Esophagus squamous epithelium (tissue), 5 donors: ENCODE measurements at regions of chr2 and their contacts with region 1.

Region 1: GRCh38 chr2:197499594-197500526 is at the starts of genes HSPD1 and HSPE1:
- DNase-seq: peak; percentile 90
- H3K4me3 ChIP-seq: peak within 1 kb of the TSS; percentile 83 to 90 (median 86)
- H3K27ac ChIP-seq: peak within 1 kb of the TSS; percentile 91 to 100 (median 98)
- H3K4me1 ChIP-seq: peaks cover 0 to 61% (median 44%) of the 10 kb centered on the region in 3 donors
- H3K27me3 ChIP-seq: no peaks in the 10 kb centered on the region
- CTCF ChIP-seq: peak in 2 of 6 experiments; percentile 15 to 47
- POLR2A ChIP-seq: peak in 3 of 4 donors; percentile 84 to 97 (median 92)
- total RNA-seq, gene HSPD1: 101 to 226 (median 177) TPM
- total RNA-seq, gene HSPE1: 80.9 to 217 (median 138) TPM

Region 2: GRCh38 chr2:197453161-197453914 is 46.5 kb before region 1 on chr2 and contains the start of gene COQ10B:
- intact Hi-C with region 1: loop called (anchors 5 kb)
- DNase-seq: peak; percentile 96
- H3K4me3 ChIP-seq: peak within 1 kb of the TSS; percentile 66 to 97 (median 92)
- H3K27ac ChIP-seq: peak within 1 kb of the TSS; percentile 98 to 100 (median 100)
- H3K4me1 ChIP-seq: peaks cover 8 to 45% (median 16%) of the 10 kb centered on the region in 3 donors
- H3K27me3 ChIP-seq: no peaks in the 10 kb centered on the region
- CTCF ChIP-seq: peak in 4 of 6 experiments; percentile 5 to 44 (median 34)
- POLR2A ChIP-seq: peak in 3 of 4 donors; percentile 64 to 94 (median 75)
- total RNA-seq, gene COQ10B: 15.9 to 26.3 (median 22.7) TPM

Region 3: DNA sequence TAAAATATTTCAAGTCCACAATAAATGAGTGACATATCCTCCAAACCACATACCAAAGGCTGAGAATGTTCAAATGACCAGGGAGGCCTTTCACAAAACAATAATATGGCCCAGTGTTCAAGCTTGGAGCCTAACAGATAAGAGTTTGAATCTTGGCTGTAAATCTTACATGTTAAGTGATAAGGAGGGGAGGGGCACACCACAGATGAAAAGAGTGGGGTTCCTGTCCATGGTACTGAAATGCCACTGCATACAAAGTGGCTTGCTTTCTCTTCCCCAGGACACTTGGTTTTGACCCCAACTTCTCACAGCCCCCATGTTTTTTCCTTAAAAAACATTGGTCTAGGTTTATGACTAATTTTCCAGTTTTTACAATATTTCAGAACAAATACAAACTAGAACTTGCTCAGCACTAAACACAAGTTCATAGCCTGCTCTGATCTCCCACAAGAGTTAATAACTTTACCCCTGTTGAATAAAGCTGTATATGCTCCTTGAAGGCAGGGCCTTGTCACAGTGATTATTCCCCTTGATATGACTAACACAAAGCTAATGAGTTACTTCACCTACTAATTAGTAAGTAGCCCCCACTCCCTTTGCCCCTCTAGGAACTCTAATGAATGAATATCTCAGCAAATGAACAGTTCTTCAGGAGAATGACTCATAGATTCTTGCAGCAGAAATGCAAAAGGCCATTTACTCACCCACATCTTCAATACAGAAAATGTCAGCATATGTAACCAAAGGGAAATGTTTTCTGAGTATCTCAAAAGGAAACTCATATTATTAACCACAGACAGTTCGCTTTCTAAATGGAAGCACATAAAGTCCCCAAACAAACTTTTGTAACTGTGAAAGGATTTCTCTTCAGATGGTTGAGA is 1815.7 kb after region 1 on chr2:
- intact Hi-C with region 1: no loop called
- DNase-seq: no peak
- H3K4me3 ChIP-seq: no peak overlapping the region
- H3K27ac ChIP-seq: no peak overlapping the region
- H3K4me1 ChIP-seq: no peaks in the 10 kb centered on the region
- H3K27me3 ChIP-seq: no peaks in the 10 kb centered on the region
- CTCF ChIP-seq: no peak
- POLR2A ChIP-seq: no peak